ENCODE measurements at regions of chr1 and their contacts with region 1.

Region 1: GRCh38 chr1:205591522-205592351 is 40.1 kb downstream of the ELK4 start:
- DNase-seq: peak; percentile 91
- ATAC-seq: peak; percentile 90
- H3K4me3 Mint-ChIP-seq: peak overlapping the region; percentile 81
- H3K27ac Mint-ChIP-seq: peak overlapping the region; percentile 95
- H3K4me1 Mint-ChIP-seq: peaks cover 42% of the 10 kb centered on the region
- H3K27me3 Mint-ChIP-seq: peaks cover 3% of the 10 kb centered on the region

Region 2: DNA sequence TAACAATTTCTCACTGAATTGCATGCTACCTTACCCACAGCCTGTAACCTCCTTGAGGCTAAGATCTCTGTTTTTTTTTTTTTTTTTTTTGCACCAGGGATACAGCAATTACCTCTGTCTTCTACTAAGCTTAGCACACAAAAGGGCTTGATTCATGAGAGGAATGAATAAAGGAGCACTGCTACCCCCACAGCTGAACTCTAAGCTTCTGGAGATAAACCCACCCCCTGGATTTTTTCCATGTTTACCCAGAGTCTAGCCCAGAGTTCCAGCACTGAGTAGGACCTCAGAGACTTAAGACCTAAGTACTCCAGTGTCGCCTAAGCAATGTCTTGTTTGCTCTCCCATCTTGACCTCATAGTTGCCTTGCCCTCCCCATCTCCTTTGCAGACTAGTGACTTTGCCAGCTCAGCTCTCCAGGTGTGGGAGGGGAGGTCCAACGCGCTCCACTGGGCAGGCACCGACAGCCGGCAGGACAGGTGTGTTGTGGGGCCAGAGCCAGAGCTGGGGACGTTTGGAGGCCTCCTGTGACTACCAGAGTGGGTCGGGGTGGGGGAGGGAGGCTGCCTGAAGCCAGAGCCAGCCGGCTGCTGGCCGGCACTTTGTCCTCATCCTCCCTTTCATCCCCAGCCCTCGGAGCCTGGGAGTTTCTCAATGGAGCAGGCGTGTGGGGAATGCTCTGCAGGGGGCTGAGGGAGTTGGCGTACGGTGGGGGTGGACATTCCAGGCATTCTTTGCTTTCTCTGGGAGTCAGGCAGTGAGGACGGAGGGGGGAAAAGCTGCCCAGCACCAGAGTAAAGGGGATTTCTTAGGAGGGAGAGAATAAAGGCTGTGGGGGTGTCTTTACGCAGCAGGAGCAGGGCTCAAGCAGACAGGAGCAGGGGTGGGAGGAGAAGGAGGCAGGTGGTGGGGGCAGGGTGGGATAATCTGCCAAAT is 290.6 kb before region 1 on chr1:
- CTCF ChIA-PET with region 1: no interaction called
- POLR2A ChIA-PET with region 1: no interaction called
- DNase-seq: no peak
- ATAC-seq: no peak
- H3K4me3 Mint-ChIP-seq: no peak overlapping the region
- H3K27ac Mint-ChIP-seq: no peak overlapping the region
- H3K4me1 Mint-ChIP-seq: peaks cover 11% of the 10 kb centered on the region
- H3K27me3 Mint-ChIP-seq: peaks cover 4% of the 10 kb centered on the region

Region 3: GRCh38 chr1:205528887-205529825 is 62.6 kb before region 1 on chr1:
- CTCF ChIA-PET with region 1: interaction called, 24 read pairs
- POLR2A ChIA-PET with region 1: interaction called, 3 read pairs
- DNase-seq: peak; percentile 87
- ATAC-seq: peak; percentile 95
- H3K4me3 Mint-ChIP-seq: peak overlapping the region; percentile 43
- H3K27ac Mint-ChIP-seq: no peak overlapping the region
- H3K4me1 Mint-ChIP-seq: peaks cover 4% of the 10 kb centered on the region
- H3K27me3 Mint-ChIP-seq: no peaks in the 10 kb centered on the region

Region 4: GRCh38 chr1:205610036-205610435 is 18.3 kb after region 1 on chr1:
- CTCF ChIA-PET with region 1: interaction called, 22 read pairs
- POLR2A ChIA-PET with region 1: interaction called, 3 read pairs
- DNase-seq: peak; percentile 6
- ATAC-seq: no peak
- H3K4me3 Mint-ChIP-seq: no peak overlapping the region
- H3K27ac Mint-ChIP-seq: no peak overlapping the region
- H3K4me1 Mint-ChIP-seq: peaks cover 34% of the 10 kb centered on the region
- H3K27me3 Mint-ChIP-seq: no peaks in the 10 kb centered on the region

Region 5: GRCh38 chr1:205637854-205638468 is 46.2 kb after region 1 on chr1:
- CTCF ChIA-PET with region 1: interaction called, 364 read pairs
- POLR2A ChIA-PET with region 1: interaction called, 198 read pairs
- DNase-seq: no peak
- ATAC-seq: no peak
- H3K4me3 Mint-ChIP-seq: no peak overlapping the region
- H3K27ac Mint-ChIP-seq: no peak overlapping the region
- H3K4me1 Mint-ChIP-seq: peaks cover 7% of the 10 kb centered on the region
- H3K27me3 Mint-ChIP-seq: peaks cover 21% of the 10 kb centered on the region

Region 6: GRCh38 chr1:205733438-205734169 is 141.9 kb after region 1 on chr1:
- CTCF ChIA-PET with region 1: no interaction called
- POLR2A ChIA-PET with region 1: no interaction called
- DNase-seq: no peak
- ATAC-seq: no peak
- H3K4me3 Mint-ChIP-seq: no peak overlapping the region
- H3K27ac Mint-ChIP-seq: no peak overlapping the region
- H3K4me1 Mint-ChIP-seq: peaks cover 35% of the 10 kb centered on the region
- H3K27me3 Mint-ChIP-seq: no peaks in the 10 kb centered on the region

Region 7: DNA sequence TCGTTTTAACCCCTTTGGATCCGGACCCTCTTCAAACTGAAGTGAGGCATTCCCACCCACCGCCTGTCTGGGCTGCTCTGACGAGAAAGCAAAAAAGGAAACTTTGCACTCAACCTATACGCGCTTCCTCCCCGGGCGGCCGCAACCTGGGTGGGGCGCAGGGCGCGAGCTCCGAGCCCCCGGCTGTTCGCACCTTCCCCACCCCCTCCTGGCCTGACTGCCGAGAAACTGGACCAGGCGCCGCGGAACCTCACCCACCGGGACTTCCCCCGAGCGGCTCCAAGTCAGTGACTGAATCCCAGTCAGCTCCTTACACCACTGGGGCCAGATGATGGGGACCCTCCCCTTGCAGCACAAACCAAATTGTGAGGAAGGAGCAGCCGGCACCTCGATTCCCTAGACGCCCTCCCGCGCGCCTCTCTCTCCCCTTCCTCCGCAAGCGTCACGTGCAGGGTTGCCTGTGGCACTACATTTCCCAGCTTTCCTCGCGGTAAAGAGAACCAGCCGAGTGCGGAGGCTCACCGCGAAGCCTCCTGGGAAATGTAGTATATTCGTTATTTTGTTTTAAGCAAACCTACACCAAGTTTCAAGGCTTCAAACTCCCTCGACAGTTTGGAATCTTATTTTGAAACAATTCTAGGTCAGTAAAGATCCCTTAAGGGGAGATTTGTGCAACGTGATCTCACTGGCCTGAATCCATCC is 183.4 kb after region 1 on chr1 and contains the start of gene RAB29:
- CTCF ChIA-PET with region 1: interaction called, 10 read pairs
- POLR2A ChIA-PET with region 1: no interaction called
- DNase-seq: peak; percentile 92
- ATAC-seq: peak; percentile 88
- H3K4me3 Mint-ChIP-seq: peak within 1 kb of the TSS; percentile 97
- H3K27ac Mint-ChIP-seq: peak within 1 kb of the TSS; percentile 92
- H3K4me1 Mint-ChIP-seq: peaks cover 56% of the 10 kb centered on the region
- H3K27me3 Mint-ChIP-seq: no peaks in the 10 kb centered on the region
- total RNA-seq, gene RAB29: 42.5 to 42.7 TPM

Measured in activated CD8-positive, alpha-beta T cell treated with anti-CD3 and anti-CD28 coated beads, Interleukin-2, amount 10 ng/mL, durations not matched to agents 7 days and 5 days (primary cell).